RWPE1 (cell line): ENCODE measurements at regions of chr10 and their contacts with region 1.

Region 1: DNA sequence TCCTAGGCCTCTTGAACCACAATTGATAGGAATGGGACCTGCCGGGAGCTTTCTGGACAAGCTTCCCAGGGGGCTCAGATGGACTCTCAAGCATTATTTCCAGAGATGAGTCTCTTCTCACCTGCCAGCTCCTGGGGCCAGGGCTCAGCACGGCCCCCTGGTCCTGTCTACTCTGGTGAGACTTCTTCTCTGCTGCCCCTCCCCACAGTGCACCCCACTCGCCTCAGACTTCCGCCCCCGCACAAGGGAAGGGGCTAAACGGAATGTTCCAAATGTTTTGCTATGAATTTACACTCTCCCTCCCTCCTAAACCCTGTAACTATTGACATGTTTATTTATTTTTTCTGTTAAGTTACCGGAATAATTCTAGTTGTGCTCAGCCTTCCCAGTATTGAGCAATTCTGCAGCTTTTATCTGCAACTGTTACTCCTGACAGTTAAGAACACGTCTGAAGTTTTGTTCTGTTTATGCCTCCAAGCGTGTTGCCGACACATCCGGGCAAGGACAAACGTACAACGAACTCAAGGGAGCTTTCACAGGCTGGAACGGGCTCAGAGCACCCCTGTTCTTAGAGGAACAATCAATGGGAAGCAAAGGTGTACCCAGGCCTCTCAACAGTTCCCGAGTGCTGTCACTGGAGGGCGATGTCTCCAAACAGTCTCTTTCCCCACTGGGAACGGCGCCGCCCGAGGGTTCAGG is 55.2 kb downstream of the FHIP2A start:
- DNase-seq: peak; percentile 90
- H3K27ac ChIP-seq: peak overlapping the region; percentile 33; the same call in 1 of the 2 replicates
- CTCF ChIP-seq: peak; percentile 84

Region 2: GRCh38 chr10:114151486-114151885 is 725.3 kb before region 1 on chr10:
- CTCF ChIA-PET with region 1: interaction called, 10 read pairs
- POLR2A ChIA-PET with region 1: no interaction called
- DNase-seq: peak; percentile 83
- H3K27ac ChIP-seq: no peak overlapping the region
- CTCF ChIP-seq: no peak

Region 3: DNA sequence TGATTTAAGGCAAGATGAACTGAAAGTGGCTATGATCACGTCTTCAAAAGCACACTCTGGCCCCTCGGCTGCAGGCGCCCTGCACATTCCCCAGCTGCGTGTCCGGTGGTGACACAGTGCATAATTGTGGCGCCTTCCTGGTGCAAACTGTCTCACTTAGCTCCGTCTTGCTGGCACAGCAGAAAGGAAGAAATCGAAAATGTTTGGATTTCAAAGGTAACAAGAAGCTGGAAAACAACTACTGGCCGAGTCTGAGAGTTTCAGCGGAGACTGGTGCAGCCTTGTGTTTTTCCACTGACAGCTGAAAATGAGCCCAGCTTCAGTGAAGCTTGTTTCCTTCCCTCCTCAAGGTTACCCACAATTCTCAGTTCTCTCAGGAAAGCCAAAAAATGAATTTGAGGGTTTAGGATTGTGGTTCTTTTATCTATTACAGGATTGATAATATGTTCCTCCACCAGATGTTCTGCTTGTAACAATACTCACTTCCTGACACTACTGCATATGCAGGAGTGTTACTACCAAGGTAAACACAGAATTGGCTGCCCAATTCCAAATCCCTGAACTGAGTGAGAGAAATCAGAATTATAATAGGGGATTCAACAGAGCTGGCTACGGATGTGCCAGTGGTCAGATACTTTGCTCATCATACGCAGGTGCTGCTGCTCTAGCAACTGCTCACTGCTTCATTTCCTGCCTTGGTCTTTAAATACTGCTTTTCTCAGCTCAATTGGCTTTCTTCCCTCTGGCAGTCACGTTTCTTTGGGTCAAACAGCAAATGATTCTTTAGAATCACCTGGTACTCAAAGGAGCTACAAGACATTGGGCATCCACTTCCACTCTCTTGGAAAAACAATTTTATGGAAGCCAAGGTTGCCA is 125.0 kb after region 1 on chr10:
- CTCF ChIA-PET with region 1: no interaction called
- POLR2A ChIA-PET with region 1: no interaction called
- DNase-seq: no peak
- H3K27ac ChIP-seq: no peak overlapping the region
- CTCF ChIP-seq: no peak

Region 4: GRCh38 chr10:115129752-115130151 is 253.0 kb after region 1 on chr10:
- CTCF ChIA-PET with region 1: interaction called, 43 read pairs
- POLR2A ChIA-PET with region 1: no interaction called
- DNase-seq: peak; percentile 20
- H3K27ac ChIP-seq: no peak overlapping the region
- CTCF ChIP-seq: peak; percentile 36